ENCODE measurements at regions of chr19 and their contacts with region 1.

Region 1: DNA sequence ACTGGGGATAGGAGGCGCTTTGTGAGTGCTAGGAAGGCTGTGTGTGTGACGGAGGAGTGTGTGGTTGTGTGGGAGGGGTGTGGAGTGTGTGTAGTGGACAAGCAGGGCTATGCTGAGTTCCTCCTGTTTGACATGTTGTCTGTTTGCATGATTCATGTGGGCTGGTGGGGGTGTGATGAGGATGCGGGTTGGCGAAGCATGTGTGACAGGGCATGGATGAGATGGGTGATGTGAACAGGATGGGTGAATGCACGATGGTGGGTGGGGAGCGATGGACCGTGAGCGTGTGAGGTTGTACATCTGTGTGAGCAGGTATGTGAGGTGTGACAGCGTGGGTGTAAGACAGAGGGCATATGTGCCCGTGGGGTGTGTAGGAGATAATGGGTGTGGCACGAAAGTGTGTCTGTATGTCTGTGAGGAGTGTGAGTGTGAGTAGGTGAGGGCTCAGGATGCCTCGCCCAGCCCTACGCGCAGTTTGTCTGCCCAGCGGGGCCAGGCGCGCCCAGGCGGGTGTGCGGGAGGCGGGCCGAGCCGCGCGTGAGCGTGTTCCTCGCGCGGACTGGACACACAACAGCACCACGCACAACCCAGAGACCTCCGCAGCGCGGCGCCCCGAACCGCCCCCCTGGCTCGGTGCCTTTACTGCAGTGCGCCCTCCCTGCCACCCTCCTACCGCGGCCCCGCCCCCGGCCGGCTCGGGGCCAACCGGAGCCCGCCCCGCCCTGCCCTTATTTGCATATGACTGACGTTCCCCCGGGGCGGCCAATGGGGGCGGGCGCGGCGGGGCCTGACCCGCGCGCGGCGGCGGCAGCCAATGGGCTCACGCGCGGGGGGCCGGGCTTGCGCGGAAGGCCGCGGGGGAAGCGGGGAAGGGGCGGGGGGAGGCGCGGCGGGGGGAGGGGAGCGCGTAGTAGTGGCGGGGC is 14.4 kb downstream of the CIC start:
- DNase-seq: peak; percentile 98
- ATAC-seq: peak; percentile 69
- H3K4me3 Mint-ChIP-seq: no peak overlapping the region
- H3K27ac Mint-ChIP-seq: no peak overlapping the region
- H3K4me1 Mint-ChIP-seq: peaks cover 45% of the 10 kb centered on the region
- H3K27me3 Mint-ChIP-seq: no peaks in the 10 kb centered on the region

Region 2: DNA sequence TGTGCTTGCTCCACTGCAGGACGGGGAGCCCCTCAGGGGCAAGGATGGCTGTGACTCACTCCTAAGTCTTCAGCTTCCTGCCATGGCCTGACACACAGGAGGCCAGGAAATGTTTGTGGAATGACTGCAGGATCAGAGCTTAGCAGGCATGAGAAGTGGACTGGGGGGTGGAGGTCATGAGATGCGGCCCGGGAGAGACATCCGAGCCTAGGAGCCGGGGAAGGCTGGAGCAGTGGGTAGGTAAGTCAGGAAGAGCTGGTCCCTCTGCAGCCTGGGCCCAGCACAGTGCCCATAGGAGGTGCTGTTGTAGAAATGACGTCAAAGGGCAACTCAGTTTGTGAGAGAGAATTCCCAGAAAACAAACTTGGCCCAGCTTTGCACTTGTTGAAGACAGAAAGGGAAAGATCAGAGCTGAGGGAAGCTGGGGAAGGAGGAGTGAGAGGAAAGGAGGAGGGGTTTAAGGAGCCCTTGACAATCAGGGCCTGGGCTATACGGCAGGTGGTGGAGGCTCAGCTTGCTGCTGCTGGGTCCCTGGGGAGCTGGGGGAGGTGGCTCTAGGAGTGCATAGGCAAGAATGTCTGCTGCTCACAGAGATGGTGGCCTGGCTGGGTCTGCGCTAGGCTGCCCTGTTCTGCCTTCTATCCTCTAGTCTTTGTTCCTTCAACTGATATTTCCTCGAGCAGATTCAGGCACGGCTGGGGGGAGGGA is 169.6 kb before region 1 on chr19:
- CTCF ChIA-PET with region 1: interaction called, 12 read pairs
- POLR2A ChIA-PET with region 1: no interaction called
- DNase-seq: no peak
- ATAC-seq: no peak
- H3K4me3 Mint-ChIP-seq: no peak overlapping the region
- H3K27ac Mint-ChIP-seq: peak overlapping the region; percentile 30
- H3K4me1 Mint-ChIP-seq: peaks cover 37% of the 10 kb centered on the region
- H3K27me3 Mint-ChIP-seq: no peaks in the 10 kb centered on the region

Region 3: DNA sequence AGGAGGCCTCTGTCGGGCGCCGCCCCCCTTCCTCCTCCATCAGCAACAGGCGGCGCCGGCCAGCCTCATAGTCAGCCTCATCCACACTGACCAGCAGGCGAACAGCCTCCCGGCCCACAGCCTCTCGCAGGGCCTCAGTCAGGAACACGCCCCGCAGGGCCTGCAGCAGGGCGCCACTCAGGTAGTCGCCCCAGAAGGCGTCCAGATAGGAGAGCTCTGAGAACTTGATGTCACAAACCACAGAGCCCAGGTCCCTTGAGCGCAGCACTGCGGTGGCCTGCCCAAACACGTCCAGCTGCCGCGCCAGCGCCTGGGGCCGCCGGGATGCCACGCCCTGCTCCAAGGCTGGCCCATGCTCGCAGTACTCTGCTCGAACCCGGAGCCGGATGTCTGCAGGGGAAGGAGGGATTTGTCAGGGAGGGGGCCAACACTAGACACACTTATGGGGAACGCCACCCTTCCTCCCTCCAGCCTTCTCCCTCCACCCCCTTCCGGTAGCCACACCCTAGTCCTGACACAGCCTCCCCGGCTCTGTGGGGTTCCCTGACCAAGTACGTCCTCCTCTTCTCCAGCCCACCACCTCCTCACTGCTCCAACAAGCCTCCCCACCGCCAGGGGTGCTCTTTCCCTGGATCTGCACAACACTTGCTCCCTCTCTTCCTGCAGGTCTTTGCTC is 83.8 kb before region 1 on chr19:
- CTCF ChIA-PET with region 1: interaction called, 10 read pairs
- POLR2A ChIA-PET with region 1: interaction called, 4 read pairs
- DNase-seq: peak; percentile 92
- ATAC-seq: peak; percentile 74
- H3K4me3 Mint-ChIP-seq: peak overlapping the region; percentile 72
- H3K27ac Mint-ChIP-seq: peak overlapping the region; percentile 96
- H3K4me1 Mint-ChIP-seq: peaks cover 80% of the 10 kb centered on the region
- H3K27me3 Mint-ChIP-seq: no peaks in the 10 kb centered on the region

Region 4: DNA sequence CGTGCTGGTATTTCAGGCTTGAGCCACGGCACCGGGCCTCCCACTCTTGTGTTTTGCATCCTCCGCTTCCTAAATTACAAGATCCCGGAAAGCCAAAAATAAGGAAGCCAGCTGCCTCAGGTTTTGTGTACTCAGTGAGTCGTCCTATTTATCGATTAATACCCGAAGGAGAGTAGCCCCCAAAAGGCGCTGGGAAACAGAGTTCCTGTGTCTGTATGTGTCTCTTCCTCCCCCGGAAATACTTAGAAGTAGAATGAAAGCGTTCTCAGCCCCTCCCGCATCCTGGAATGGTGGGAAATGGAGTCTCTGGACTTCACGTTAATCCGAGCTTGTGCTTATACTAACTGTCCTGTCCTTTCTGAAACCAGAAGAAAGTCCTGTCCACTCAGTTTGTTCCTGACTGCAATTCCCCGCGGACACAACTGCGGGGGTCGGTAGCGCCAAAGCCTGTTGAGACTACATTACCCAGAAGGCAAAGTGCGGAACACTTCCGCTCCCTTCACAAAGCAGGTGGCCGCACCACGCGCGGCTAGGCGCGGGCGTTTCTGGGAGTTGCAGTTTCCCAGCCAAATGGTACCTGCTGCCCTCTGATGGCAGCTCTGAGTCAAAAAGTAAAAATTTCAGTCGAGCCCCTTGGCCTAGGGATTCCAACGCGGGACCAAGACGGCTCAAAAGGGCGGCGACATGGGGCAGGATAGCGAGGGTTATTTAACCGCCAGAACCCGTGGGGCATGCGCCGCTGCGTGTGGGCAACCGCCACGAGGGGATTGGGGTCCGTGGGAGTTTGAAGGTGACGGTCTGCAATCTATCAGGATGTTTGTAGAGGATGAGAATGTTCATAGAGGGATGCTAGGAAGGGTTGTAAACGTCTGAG is 38.8 kb before region 1 on chr19:
- CTCF ChIA-PET with region 1: interaction called, 113 read pairs
- POLR2A ChIA-PET with region 1: interaction called, 13 read pairs
- DNase-seq: peak; percentile 96
- ATAC-seq: peak; percentile 47
- H3K4me3 Mint-ChIP-seq: peak overlapping the region; percentile 95
- H3K27ac Mint-ChIP-seq: peak overlapping the region; percentile 96
- H3K4me1 Mint-ChIP-seq: peaks cover 48% of the 10 kb centered on the region
- H3K27me3 Mint-ChIP-seq: no peaks in the 10 kb centered on the region

Region 5: DNA sequence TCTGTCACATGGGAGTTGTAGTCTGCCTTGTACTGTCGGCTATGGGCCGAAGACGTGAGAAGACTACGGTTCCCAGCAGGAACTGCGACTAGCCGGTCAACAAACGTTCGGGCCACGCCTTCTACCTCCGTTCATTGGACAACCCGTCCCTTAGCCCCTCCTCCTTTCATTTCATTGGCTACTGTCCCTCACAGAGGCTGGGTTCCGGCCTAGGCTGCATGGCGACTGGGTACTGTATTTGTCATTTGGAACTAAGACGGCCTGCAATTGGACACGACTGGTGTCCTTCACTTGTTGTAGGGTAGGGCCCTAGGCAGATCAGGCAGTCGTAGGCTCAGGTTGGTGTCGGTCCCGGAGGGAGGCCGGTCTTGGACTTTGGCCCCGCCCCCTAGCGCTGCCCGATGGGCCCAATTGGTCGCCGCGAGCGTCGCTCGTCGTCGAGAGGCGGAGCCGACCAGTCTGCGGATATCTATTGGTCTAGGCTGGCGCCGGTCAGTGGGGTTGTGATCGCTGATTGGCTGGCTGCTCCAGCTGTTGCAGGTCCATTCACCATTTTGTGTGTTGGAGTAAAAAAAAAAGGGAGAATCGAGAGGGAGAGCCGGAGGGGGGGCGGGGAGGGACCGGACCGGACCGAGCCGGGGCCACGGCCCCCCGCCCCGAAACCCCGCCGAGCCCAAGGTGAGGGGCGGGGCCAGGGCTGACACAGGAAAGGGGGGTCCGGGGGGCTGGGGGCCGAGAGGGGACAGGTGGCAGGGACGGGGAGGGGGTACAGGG is 14.5 kb before region 1 on chr19 and contains the start of gene CIC:
- CTCF ChIA-PET with region 1: interaction called, 60 read pairs
- POLR2A ChIA-PET with region 1: interaction called, 33 read pairs
- DNase-seq: peak; percentile 100
- ATAC-seq: peak; percentile 89
- H3K4me3 Mint-ChIP-seq: no peak within 1 kb of the TSS
- H3K27ac Mint-ChIP-seq: no peak within 1 kb of the TSS
- H3K4me1 Mint-ChIP-seq: peaks cover 34% of the 10 kb centered on the region
- H3K27me3 Mint-ChIP-seq: no peaks in the 10 kb centered on the region
- total RNA-seq, gene CIC: 73.1 to 83.8 TPM